Activated CD8-positive, alpha-beta T cell treated with anti-CD3 and anti-CD28 coated beads for 36 hours (primary cell): ENCODE measurements at regions of chr1 and their contacts with region 1.

Region 1: GRCh38 chr1:242011894-242012660 is 13.2 kb upstream of the MAP1LC3C start:
- DNase-seq: no peak
- ATAC-seq: no peak
- H3K4me3 Mint-ChIP-seq: no peak overlapping the region
- H3K27ac Mint-ChIP-seq: no peak overlapping the region
- H3K4me1 Mint-ChIP-seq: no peaks in the 10 kb centered on the region
- H3K27me3 Mint-ChIP-seq: no peaks in the 10 kb centered on the region
- CTCF ChIP-seq: no peak

Region 2: DNA sequence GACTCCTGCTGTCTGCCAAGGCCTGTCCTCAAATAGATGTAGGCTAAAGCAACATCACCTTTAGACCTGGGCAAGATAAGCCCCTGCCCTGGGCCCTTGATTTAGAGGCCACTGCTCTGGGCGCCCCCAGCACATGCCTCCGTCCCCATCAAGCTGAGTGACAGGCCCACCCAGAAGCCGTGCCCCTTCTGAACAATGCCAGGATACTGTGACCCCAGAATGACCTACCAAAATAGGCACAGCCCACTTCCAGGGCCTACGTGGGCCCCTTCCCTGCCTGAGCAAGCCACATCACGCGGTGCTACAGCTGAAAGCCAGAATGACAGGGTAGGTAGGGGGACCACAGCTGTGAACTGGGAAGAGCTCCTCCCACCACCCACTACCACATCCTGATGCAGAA is 79.2 kb before region 1 on chr1:
- CTCF ChIA-PET with region 1: no interaction called
- POLR2A ChIA-PET with region 1: no interaction called
- intact Hi-C with region 1: no loop called
- DNase-seq: no peak
- ATAC-seq: no peak
- H3K4me3 Mint-ChIP-seq: no peak overlapping the region
- H3K27ac Mint-ChIP-seq: no peak overlapping the region
- H3K4me1 Mint-ChIP-seq: no peaks in the 10 kb centered on the region
- H3K27me3 Mint-ChIP-seq: peaks cover 4% of the 10 kb centered on the region
- CTCF ChIP-seq: no peak

Region 3: GRCh38 chr1:241998412-241998921 is 13.6 kb before region 1 on chr1:
- CTCF ChIA-PET with region 1: interaction called, 16 read pairs
- POLR2A ChIA-PET with region 1: no interaction called
- intact Hi-C with region 1: no loop called
- DNase-seq: peak; percentile 63
- ATAC-seq: peak; percentile 74
- H3K4me3 Mint-ChIP-seq: peak overlapping the region; percentile 24
- H3K27ac Mint-ChIP-seq: no peak overlapping the region
- H3K4me1 Mint-ChIP-seq: peaks cover 4% of the 10 kb centered on the region
- H3K27me3 Mint-ChIP-seq: peaks cover 5% of the 10 kb centered on the region
- CTCF ChIP-seq: peak; percentile 80